Endothelial cell of umbilical vein (primary cell): ENCODE measurements at regions of chr19 and their contacts with region 1.

Region 1: DNA sequence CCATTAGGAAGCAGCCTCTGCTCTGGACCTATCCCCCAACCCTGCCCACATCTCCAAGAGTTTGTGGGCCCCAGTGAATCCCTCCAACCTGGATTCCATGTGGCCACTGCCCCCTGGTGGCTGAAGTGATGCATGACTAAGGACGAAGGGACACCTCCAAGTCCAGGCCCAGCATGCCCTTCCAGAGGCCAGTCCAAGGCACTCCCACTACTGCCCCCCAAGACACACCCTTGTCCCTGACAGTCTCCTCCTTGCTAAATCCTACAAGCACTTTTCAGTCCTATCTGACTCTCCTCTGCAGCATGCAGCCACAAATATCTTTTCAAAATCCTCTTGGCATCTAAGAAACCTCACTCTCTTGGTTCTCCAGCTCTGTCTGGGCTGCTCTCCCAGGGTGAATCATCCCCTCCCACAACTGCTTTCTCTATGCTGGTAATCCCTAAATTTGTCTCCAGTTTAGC is 33.0 kb downstream of the DEDD2 start:
- DNase-seq: peak; percentile 75
- H3K4me3 ChIP-seq: no peak overlapping the region
- H3K27ac ChIP-seq: no peak overlapping the region
- H3K4me1 ChIP-seq: no peaks in the 10 kb centered on the region
- H3K27me3 ChIP-seq: peaks cover 17 to 28% of the 10 kb centered on the region in 2 experiments
- CTCF ChIP-seq: peak; percentile 76 to 91
- POLR2A ChIP-seq: no peak

Region 2: DNA sequence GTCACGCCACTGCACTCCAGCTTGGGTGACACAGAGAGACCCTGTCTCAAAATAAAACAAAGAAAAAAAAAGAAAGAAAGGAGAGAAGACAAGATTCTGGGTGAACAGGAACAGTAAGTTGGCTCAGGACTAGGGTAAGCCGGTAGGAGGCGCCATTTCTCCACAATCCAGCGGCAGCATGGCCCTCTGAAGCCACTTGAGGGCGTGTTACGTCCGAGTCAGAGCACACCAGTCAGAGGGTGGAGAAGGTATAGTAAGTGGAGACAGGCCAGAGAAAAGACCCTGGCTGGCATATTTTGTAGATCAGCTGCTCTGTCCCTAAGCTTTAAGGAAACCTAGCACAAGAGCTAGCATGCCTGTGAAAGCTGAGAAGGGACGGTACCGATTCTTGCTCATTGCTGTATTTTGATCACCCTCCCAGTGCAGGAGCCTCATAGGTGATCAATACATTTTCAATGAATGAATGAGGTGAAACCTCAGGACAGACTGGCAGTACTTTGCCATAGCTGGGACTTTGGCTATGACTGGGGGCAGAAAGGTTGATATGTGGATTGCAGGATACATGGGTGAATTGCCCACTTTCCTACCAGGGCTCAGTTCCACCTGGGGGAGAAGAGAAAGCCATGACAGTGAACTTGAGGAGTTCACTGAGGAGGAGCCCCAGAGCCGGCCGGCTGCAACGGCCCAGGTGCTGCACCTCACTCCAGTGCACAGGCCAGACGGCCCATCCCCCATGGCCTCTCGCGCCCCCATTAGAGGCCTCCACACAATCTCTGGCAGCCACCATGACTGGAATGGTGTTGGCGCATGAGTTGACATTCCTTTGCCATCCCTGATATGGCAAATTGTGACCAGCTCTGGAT is 75.7 kb before region 1 on chr19:
- CTCF ChIA-PET with region 1: interaction called, 69 read pairs
- POLR2A ChIA-PET with region 1: no interaction called
- dilution Hi-C with region 1: no loop called
- intact Hi-C with region 1: loop called (anchors 1 kb)
- DNase-seq: peak; percentile 90
- H3K4me3 ChIP-seq: no peak overlapping the region
- H3K27ac ChIP-seq: no peak overlapping the region
- H3K4me1 ChIP-seq: peaks cover 20% of the 10 kb centered on the region
- H3K27me3 ChIP-seq: peaks cover 3% of the 10 kb centered on the region in 2 experiments
- CTCF ChIP-seq: peak; percentile 99 to 100
- POLR2A ChIP-seq: no peak

Region 3: GRCh38 chr19:42140125-42140754 is 44.2 kb before region 1 on chr19:
- CTCF ChIA-PET with region 1: interaction called, 13 read pairs
- POLR2A ChIA-PET with region 1: no interaction called
- dilution Hi-C with region 1: no loop called
- intact Hi-C with region 1: loop called (anchors 2 kb)
- DNase-seq: peak; percentile 68
- H3K4me3 ChIP-seq: no peak overlapping the region
- H3K27ac ChIP-seq: no peak overlapping the region
- H3K4me1 ChIP-seq: no peaks in the 10 kb centered on the region
- H3K27me3 ChIP-seq: no peaks in the 10 kb centered on the region
- CTCF ChIP-seq: peak in 1 of 2 donors; percentile 3
- POLR2A ChIP-seq: no peak